ENCODE measurements at regions of chr15 and their contacts with region 1.

Region 1: GRCh38 chr15:99845009-99845408 is 111.8 kb upstream of the LYSMD4 start:
- DNase-seq: no peak
- H3K4me3 Mint-ChIP-seq: no peak overlapping the region
- H3K27ac Mint-ChIP-seq: peak overlapping the region; percentile 76
- H3K4me1 Mint-ChIP-seq: peaks cover 25% of the 10 kb centered on the region
- H3K27me3 Mint-ChIP-seq: no peaks in the 10 kb centered on the region

Region 2: GRCh38 chr15:99682455-99682854 is 162.6 kb before region 1 on chr15:
- intact Hi-C with region 1: no loop called
- DNase-seq: no peak
- H3K4me3 Mint-ChIP-seq: no peak overlapping the region
- H3K27ac Mint-ChIP-seq: peak overlapping the region; percentile 5
- H3K4me1 Mint-ChIP-seq: peaks cover 19% of the 10 kb centered on the region
- H3K27me3 Mint-ChIP-seq: no peaks in the 10 kb centered on the region

Region 3: GRCh38 chr15:99826157-99826780 is 18.7 kb before region 1 on chr15:
- intact Hi-C with region 1: loop called (anchors 1 kb)
- DNase-seq: no peak
- H3K4me3 Mint-ChIP-seq: no peak overlapping the region
- H3K27ac Mint-ChIP-seq: peak overlapping the region; percentile 76
- H3K4me1 Mint-ChIP-seq: peaks cover 18% of the 10 kb centered on the region
- H3K27me3 Mint-ChIP-seq: no peaks in the 10 kb centered on the region